Activated CD4-positive, alpha-beta T cell treated with anti-CD3 and anti-CD28 coated beads, Interleukin-2, amount 10 ng/mL, durations not matched to agents 24 days and 14 days (primary cell): ENCODE measurements at regions of chr5 and their contacts with region 1.

Region 1: GRCh38 chr5:79612667-79613198 is 492 bp downstream of the TENT2 start:
- DNase-seq: no peak
- H3K4me3 Mint-ChIP-seq: peak overlapping the region; percentile 94
- H3K27ac Mint-ChIP-seq: peak overlapping the region; percentile 97
- H3K4me1 Mint-ChIP-seq: peaks cover 28% of the 10 kb centered on the region
- H3K27me3 Mint-ChIP-seq: no peaks in the 10 kb centered on the region

Region 2: GRCh38 chr5:79514391-79515105 is 98.2 kb before region 1 on chr5:
- intact Hi-C with region 1: loop called (anchors 1 kb)
- DNase-seq: peak; percentile 97
- H3K4me3 Mint-ChIP-seq: peak overlapping the region; percentile 88
- H3K27ac Mint-ChIP-seq: peak overlapping the region; percentile 97
- H3K4me1 Mint-ChIP-seq: peaks cover 32% of the 10 kb centered on the region
- H3K27me3 Mint-ChIP-seq: peaks cover 23% of the 10 kb centered on the region

Region 3: DNA sequence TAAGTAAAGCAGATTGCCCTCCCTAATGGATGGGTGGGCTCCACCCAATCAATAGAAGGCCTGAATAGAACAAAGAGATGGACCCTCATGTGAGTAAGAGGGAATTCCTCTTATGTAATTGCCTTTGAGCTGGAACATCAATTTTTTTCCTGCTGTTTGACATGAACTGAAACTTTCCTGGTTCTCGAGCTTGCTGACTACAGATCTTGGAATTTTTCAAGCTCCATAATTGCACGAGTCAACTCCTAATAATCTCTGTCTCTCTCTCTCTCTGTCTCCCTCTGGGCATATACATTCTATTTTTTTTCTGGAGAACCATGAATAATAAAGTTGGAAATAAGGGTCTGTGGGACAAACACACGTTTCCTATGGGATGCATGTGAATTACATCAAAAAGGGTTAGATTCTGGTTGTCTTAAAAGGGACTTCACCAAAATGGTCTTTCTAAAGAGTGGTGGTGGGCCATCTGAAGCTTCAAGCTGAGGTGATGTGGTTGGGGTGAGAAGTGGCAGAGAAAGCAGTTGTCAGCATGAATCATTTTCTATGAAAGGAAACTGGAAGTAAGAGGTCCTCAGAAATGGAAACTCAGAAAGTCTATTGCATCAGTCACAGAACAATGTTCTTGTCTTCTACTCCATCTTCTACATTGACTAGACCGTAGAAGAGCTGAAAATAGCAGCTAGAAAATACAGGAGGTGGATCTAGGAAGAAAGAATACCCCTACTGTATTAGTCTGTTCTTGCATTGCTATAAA is 51.8 kb before region 1 on chr5:
- intact Hi-C with region 1: loop called (anchors 1 kb)
- DNase-seq: peak; percentile 76
- H3K4me3 Mint-ChIP-seq: peak overlapping the region; percentile 61
- H3K27ac Mint-ChIP-seq: peak overlapping the region; percentile 97
- H3K4me1 Mint-ChIP-seq: peaks cover 31% of the 10 kb centered on the region
- H3K27me3 Mint-ChIP-seq: no peaks in the 10 kb centered on the region

Region 4: GRCh38 chr5:79845448-79846197 is 232.9 kb after region 1 on chr5:
- intact Hi-C with region 1: loop called (anchors 5 kb)
- DNase-seq: peak; percentile 75
- H3K4me3 Mint-ChIP-seq: peak overlapping the region; percentile 9
- H3K27ac Mint-ChIP-seq: peak overlapping the region; percentile 75
- H3K4me1 Mint-ChIP-seq: peaks cover 21% of the 10 kb centered on the region
- H3K27me3 Mint-ChIP-seq: peaks cover under 1% of the 10 kb centered on the region

Region 5: GRCh38 chr5:80654391-80655230 is 1041.9 kb after region 1 on chr5 and contains the starts of genes DHFR and MSH3:
- intact Hi-C with region 1: loop called (anchors 1 kb)
- DNase-seq: peak; percentile 96
- H3K4me3 Mint-ChIP-seq: peak within 1 kb of the TSS; percentile 84
- H3K27ac Mint-ChIP-seq: peak within 1 kb of the TSS; percentile 93
- H3K4me1 Mint-ChIP-seq: peaks cover 23% of the 10 kb centered on the region
- H3K27me3 Mint-ChIP-seq: no peaks in the 10 kb centered on the region
- total RNA-seq, gene DHFR: 66.5 and 73.4 TPM in 2 replicates
- total RNA-seq, gene MSH3: 21.0 and 21.1 TPM in 2 replicates